Transverse colon (tissue), 4 donors: ENCODE measurements at regions of chr5 and their contacts with region 1.

Region 1: GRCh38 chr5:138503487-138504270 is 38.4 kb downstream of the EGR1 start:
- DNase-seq: peak; percentile 19
- H3K4me3 ChIP-seq: no peak overlapping the region
- H3K27ac ChIP-seq: peak overlapping the region in 3 of 4 donors; percentile 13 to 57 (median 14)
- H3K4me1 ChIP-seq: peaks cover 0 to 6% (median 4%) of the 10 kb centered on the region in 4 donors
- H3K27me3 ChIP-seq: no peaks in the 10 kb centered on the region
- CTCF ChIP-seq: peak; percentile 67 to 83 (median 74)
- EP300 ChIP-seq: no peak
- POLR2A ChIP-seq: no peak

Region 2: DNA sequence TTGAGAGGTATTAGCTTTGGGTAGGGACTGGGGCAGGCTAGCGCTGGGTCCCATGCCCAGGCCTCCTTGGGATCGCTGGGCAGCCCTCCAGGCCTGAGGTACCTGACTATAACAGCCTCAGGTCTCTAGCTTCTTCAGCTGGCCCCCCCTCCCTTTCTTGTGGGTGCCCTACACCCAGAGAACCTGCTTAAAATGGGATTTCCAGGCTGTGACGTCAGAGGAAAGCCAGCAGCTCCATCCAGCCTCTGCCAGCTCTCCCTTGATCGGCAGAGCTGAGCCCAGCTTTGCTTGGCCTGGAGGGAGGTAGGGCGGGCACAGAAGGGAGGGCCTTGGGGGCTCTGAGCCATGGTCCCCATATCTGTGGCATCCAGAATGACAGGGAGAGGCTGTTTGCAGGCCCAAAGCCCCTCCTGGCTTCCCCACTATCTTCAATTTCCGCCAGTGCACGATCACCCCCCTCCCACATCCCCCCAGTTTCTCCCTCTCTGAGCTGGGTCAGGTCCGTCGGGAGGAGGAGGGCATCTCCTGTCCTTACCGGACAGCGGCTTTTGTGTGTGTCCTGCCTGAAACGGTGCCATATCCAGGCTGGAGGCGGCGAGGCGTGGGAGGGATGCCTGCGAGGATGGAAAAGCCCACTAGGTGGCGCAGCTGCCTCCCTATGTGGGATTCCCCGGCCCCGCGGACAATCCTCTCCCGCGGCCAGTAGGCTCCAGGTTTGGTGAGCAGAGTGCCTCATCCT is 54.0 kb before region 1 on chr5:
- in situ Hi-C with region 1: loop called in 2 of 4 experiments (anchors 5 kb)
- intact Hi-C with region 1: loop called (anchors 2 kb)
- DNase-seq: peak; percentile 90
- H3K4me3 ChIP-seq: no peak overlapping the region
- H3K27ac ChIP-seq: no peak overlapping the region
- H3K4me1 ChIP-seq: peaks cover 0 to 10% (median 8%) of the 10 kb centered on the region in 4 donors
- H3K27me3 ChIP-seq: no peaks in the 10 kb centered on the region
- CTCF ChIP-seq: peak; percentile 90 to 96 (median 95)
- EP300 ChIP-seq: no peak
- POLR2A ChIP-seq: no peak

Region 3: DNA sequence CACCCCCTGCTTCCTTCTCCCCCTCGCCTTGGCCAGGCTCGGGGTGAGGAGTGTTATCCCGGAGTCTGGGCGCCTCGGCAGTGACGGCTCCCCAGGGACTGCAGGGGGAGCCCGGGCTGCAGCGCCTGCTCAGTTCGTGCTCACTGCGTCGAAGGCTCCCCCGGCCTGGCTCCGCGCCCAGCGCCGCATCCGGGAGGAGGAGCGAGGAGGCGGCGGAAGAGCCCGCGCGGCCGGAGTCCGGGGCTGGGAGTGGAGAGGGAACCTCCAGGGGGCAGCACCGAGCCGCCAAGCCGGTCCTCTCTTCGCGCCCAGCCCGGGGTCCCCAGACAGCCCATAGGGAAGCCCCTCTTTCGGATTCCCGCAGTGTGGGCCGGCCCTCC is 39.7 kb before region 1 on chr5:
- in situ Hi-C with region 1: loop called in 1 of 4 experiments (anchors 5 kb)
- intact Hi-C with region 1: no loop called
- DNase-seq: peak; percentile 97
- H3K4me3 ChIP-seq: peak overlapping the region; percentile 65 to 87 (median 80)
- H3K27ac ChIP-seq: peak overlapping the region; percentile 95 to 99 (median 98)
- H3K4me1 ChIP-seq: peaks cover 12 to 35% (median 21%) of the 10 kb centered on the region in 4 donors
- H3K27me3 ChIP-seq: no peaks in the 10 kb centered on the region
- CTCF ChIP-seq: peak; percentile 91 to 99 (median 95)
- EP300 ChIP-seq: no peak
- POLR2A ChIP-seq: peak; percentile 83